ENCODE measurements at regions of chr13 and their contacts with region 1.

Region 1: GRCh38 chr13:112953591-112954487 is 15.2 kb upstream of the MCF2L start:
- DNase-seq: no peak
- H3K4me3 ChIP-seq: no peak overlapping the region
- H3K27ac ChIP-seq: no peak overlapping the region
- H3K4me1 ChIP-seq: peaks cover 11% of the 10 kb centered on the region
- H3K27me3 ChIP-seq: peaks cover 4% of the 10 kb centered on the region; the same call in 1 of the 2 replicates
- CTCF ChIP-seq: no peak

Region 2: GRCh38 chr13:113327766-113328471 is 374.1 kb after region 1 on chr13:
- CTCF ChIA-PET with region 1: interaction called, 12 read pairs
- POLR2A ChIA-PET with region 1: no interaction called
- intact Hi-C with region 1: no loop called
- DNase-seq: peak in 1 of 2 experiments; percentile 30
- H3K4me3 ChIP-seq: no peak overlapping the region
- H3K27ac ChIP-seq: no peak overlapping the region
- H3K4me1 ChIP-seq: peaks cover 15% of the 10 kb centered on the region
- H3K27me3 ChIP-seq: no peaks in the 10 kb centered on the region
- CTCF ChIP-seq: no peak